K562 (cell line): ENCODE measurements at regions of chr9 and their contacts with region 1.

Region 1: GRCh38 chr9:83596896-83597504 is 25.9 kb upstream of the IDNK start:
- DNase-seq: peak; percentile 47 to 60 (median 50)
- ATAC-seq: peak; percentile 90
- H3K4me3 ChIP-seq: no peak overlapping the region
- H3K27ac ChIP-seq: no peak overlapping the region
- H3K4me1 ChIP-seq: no peaks in the 10 kb centered on the region
- H3K27me3 ChIP-seq: no peaks in the 10 kb centered on the region
- CTCF ChIP-seq: peak; percentile 47 to 70 (median 61)
- EP300 ChIP-seq: no peak
- POLR2A ChIP-seq: no peak
- RAD21 ChIP-seq: peak; percentile 41 to 56; a peak in 3 of 4 replicates

Region 2: DNA sequence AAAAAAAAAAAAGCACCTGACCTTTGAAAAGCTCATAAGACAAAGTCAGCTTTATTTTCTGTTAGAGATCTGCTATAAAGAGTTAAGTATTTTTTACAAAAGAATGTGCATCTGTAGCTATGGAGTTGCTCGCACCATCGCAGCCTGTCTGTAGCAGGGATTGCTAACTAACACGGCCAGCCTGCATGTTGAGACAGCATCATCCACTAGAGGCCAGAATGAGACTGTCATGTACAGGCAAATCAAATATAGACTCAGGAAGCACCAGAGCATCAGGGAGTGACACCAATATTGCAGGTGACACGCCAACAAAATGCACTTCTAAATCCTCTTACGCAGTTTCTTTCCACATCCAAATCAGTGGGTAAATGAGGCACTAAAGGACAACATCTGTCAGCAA is 397.8 kb before region 1 on chr9:
- CTCF ChIA-PET with region 1: interaction called, 3 read pairs
- POLR2A ChIA-PET with region 1: no interaction called
- in situ Hi-C with region 1: no loop called
- intact Hi-C with region 1: loop called (anchors 10 kb)
- DNase-seq: peak in 1 of 4 experiments; percentile 5
- ATAC-seq: peak; percentile 70; the same call in 2 of the 3 replicates
- H3K4me3 ChIP-seq: no peak overlapping the region
- H3K27ac ChIP-seq: no peak overlapping the region
- H3K4me1 ChIP-seq: no peaks in the 10 kb centered on the region
- H3K27me3 ChIP-seq: no peaks in the 10 kb centered on the region
- CTCF ChIP-seq: peak; percentile 17 to 28 (median 28); a peak in 3 of 6 replicates
- EP300 ChIP-seq: no peak
- POLR2A ChIP-seq: no peak
- RAD21 ChIP-seq: peak; percentile 25 to 44; a peak in 2 of 4 replicates

Region 3: GRCh38 chr9:83372957-83373356 is 224.0 kb before region 1 on chr9:
- CTCF ChIA-PET with region 1: no interaction called
- POLR2A ChIA-PET with region 1: no interaction called
- in situ Hi-C with region 1: no loop called
- intact Hi-C with region 1: no loop called
- DNase-seq: no peak
- ATAC-seq: no peak
- H3K4me3 ChIP-seq: no peak overlapping the region
- H3K27ac ChIP-seq: no peak overlapping the region
- H3K4me1 ChIP-seq: no peaks in the 10 kb centered on the region
- H3K27me3 ChIP-seq: no peaks in the 10 kb centered on the region
- CTCF ChIP-seq: no peak
- EP300 ChIP-seq: no peak
- POLR2A ChIP-seq: no peak
- RAD21 ChIP-seq: no peak